ENCODE measurements at regions of chr9 and their contacts with region 1.

Region 1: DNA sequence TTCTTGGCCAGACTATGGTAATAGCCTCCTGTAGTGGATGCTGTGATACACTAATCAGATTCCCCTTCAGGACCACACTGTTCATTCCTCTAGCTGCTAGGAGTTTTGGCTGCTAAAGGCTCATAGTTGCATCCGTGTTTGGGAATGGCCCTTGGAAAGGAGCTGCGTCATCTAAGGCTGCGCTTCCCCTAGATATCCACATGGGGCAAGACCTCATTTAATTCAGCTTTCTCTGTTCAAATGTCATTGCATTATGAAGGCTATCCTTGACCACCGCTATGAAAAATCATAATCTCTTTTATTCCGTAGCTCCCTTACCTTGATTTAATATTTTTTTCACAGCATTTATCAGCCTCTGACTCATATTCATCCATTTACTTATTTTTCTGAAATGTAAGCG is 258.3 kb upstream of the NR4A3 start:
- DNase-seq: no peak
- ATAC-seq: no peak
- H3K4me3 ChIP-seq: no peak overlapping the region
- H3K27ac ChIP-seq: no peak overlapping the region
- H3K4me1 ChIP-seq: peaks cover 0 to 18% (median 0%) of the 10 kb centered on the region in 9 donors
- H3K27me3 ChIP-seq: no peaks in the 10 kb centered on the region
- CTCF ChIP-seq: peak in 1 of 9 donors; percentile 16

Region 2: GRCh38 chr9:99353408-99353807 is 210.0 kb before region 1 on chr9:
- intact Hi-C with region 1: loop called in 4 of 10 experiments (anchors 5 to 10 kb)
- DNase-seq: no peak
- ATAC-seq: no peak
- H3K4me3 ChIP-seq: no peak overlapping the region
- H3K27ac ChIP-seq: peak overlapping the region in 1 of 10 donors; percentile 43
- H3K4me1 ChIP-seq: peaks cover 0 to 23% (median 12%) of the 10 kb centered on the region in 9 donors
- H3K27me3 ChIP-seq: no peaks in the 10 kb centered on the region
- CTCF ChIP-seq: no peak

Region 3: GRCh38 chr9:99451112-99451606 is 112.2 kb before region 1 on chr9:
- intact Hi-C with region 1: loop called in 3 of 10 experiments (anchors 5 kb)
- DNase-seq: peak; percentile 17 to 67
- ATAC-seq: peak; percentile 84 to 99 (median 97)
- H3K4me3 ChIP-seq: no peak overlapping the region
- H3K27ac ChIP-seq: peak overlapping the region in 8 of 10 donors; percentile 53 to 79 (median 63)
- H3K4me1 ChIP-seq: peaks cover 0 to 15% (median 4%) of the 10 kb centered on the region in 9 donors
- H3K27me3 ChIP-seq: peaks cover 0 to 13% (median 0%) of the 10 kb centered on the region in 7 donors
- CTCF ChIP-seq: no peak

Measured in heart right ventricle (tissue), 16 donors.